Heart left ventricle (tissue), 16 donors: ENCODE measurements at regions of chr3 and their contacts with region 1.

Region 1: DNA sequence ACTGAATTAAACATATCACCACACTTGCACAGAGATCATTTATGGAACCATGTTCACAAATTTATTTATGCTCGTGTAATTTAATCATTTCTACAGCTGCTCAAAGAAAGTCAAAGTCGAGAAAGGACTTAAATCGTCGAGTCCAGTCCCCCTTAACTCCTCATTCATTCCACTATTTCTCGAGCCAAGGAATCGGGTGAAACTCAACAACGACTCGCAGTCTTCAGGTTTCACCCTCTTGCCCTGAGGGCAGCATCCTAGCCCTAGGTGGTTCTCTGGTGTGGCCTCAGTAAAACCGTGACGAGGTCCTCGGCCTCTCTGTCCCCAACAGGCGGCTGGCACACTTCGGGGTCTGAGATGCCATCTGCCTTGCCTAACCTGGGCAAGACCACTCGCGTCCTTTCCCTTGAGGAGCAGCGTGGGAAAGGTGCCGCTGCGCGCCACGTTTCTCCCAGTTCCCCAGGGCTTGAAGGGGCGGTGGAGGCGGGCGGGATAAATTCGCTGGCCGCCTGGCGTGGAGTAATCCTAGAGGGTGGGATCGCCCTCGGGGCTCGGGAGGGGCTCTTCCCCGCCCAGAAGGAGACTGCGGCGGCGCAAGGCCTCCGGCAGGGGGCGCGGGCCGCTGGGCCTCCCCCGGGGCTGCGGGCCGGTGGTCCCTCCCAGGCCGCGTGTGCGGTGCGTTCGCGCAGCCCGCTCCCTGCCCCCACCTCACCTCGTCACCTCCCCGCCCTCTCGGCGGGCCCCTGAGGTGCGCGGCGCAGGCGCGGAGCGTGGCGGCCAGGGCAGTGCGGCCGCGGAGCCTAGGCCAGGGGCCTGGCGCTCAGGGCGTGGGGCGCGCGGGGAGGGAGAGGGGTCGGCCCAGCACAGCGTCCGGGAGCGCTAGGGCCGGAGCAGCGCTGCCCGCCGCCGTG is at the start of gene ZNF639:
- DNase-seq: peak; percentile 85 to 92 (median 89)
- ATAC-seq: peak; percentile 82 to 92 (median 90)
- H3K4me3 ChIP-seq: peak within 1 kb of the TSS; percentile 38 to 97 (median 90)
- H3K27ac ChIP-seq: peak within 1 kb of the TSS; percentile 87 to 98 (median 96)
- H3K4me1 ChIP-seq: peaks cover 0 to 36% (median 22%) of the 10 kb centered on the region in 12 donors
- H3K27me3 ChIP-seq: no peaks in the 10 kb centered on the region
- CTCF ChIP-seq: peak; percentile 61 to 93 (median 89)
- POLR2A ChIP-seq: peak in 1 of 2 donors; percentile 66
- total RNA-seq, gene ZNF639: 27.1 to 46.0 (median 30.7) TPM

Region 2: GRCh38 chr3:179015551-179016020 is 307.0 kb before region 1 on chr3:
- intact Hi-C with region 1: loop called in 7 of 10 experiments (anchors 1 to 5 kb)
- DNase-seq: peak in 2 of 5 donors; percentile 32 to 34
- ATAC-seq: peak in 3 of 4 donors; percentile 69 to 77 (median 70)
- H3K4me3 ChIP-seq: no peak overlapping the region
- H3K27ac ChIP-seq: no peak overlapping the region
- H3K4me1 ChIP-seq: peaks cover 0 to 10% (median 9%) of the 10 kb centered on the region in 12 donors
- H3K27me3 ChIP-seq: no peaks in the 10 kb centered on the region
- CTCF ChIP-seq: peak; percentile 75 to 94 (median 86)
- POLR2A ChIP-seq: no peak

Region 3: DNA sequence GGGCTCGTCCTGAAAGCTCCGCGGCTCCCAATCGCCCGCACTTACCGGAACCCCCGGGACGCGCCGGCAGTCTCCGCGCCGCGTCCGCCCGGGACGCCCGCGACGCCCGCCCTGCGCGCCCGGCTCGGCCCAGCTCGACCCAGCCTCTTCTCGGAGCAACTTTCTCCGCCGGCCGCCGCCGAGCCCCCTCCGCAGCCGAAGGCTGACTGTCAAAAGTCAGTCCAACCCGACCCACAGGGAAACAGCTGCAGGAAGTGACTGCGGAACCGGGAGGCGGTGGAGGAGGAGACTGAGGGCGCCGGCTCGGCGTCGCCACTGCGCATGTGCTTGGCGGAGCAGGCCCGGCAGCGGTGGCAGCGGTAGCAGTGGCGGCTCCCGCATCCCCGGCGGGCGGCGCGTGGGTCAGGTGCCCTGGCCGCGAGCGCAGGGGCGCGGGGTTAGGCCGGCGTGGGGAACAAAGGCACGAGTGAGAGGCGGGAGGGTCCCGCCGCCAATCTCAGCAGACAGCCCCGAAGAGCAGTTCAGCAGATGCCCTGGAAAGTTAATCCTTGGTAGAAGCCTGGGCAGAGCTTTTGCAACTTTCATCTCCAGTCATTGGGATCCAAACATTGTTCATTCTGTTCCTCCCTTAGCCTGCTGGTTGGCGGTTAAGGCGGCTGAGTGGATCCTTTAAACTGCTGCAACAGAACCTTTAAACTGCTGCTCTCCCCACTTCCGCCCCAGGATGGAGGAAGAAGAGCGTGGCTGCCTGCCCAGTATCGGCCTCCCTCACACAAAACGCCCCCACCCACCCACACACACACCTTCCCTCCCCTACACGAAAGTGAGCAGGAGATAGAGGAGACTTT is 250.8 kb before region 1 on chr3 and contains the start of gene ZMAT3:
- intact Hi-C with region 1: loop called in 1 of 10 experiments (anchors 5 kb)
- DNase-seq: peak; percentile 92 to 95 (median 93)
- ATAC-seq: peak; percentile 78 to 99 (median 98)
- H3K4me3 ChIP-seq: peak within 1 kb of the TSS; percentile 49 to 96 (median 84)
- H3K27ac ChIP-seq: peak within 1 kb of the TSS; percentile 59 to 95 (median 90)
- H3K4me1 ChIP-seq: peaks cover 0 to 42% (median 21%) of the 10 kb centered on the region in 12 donors
- H3K27me3 ChIP-seq: no peaks in the 10 kb centered on the region
- CTCF ChIP-seq: peak in 2 of 12 donors; percentile 8 to 14
- POLR2A ChIP-seq: peak in 1 of 2 donors; percentile 79
- total RNA-seq, gene ZMAT3: 10.5 to 23.2 (median 15.6) TPM

Region 4: GRCh38 chr3:179108086-179108485 is 214.5 kb before region 1 on chr3:
- intact Hi-C with region 1: loop called in 5 of 10 experiments (anchors 2 to 5 kb)
- DNase-seq: no peak
- ATAC-seq: no peak
- H3K4me3 ChIP-seq: no peak overlapping the region
- H3K27ac ChIP-seq: no peak overlapping the region
- H3K4me1 ChIP-seq: no peaks in the 10 kb centered on the region
- H3K27me3 ChIP-seq: no peaks in the 10 kb centered on the region
- CTCF ChIP-seq: no peak
- POLR2A ChIP-seq: no peak

Region 5: DNA sequence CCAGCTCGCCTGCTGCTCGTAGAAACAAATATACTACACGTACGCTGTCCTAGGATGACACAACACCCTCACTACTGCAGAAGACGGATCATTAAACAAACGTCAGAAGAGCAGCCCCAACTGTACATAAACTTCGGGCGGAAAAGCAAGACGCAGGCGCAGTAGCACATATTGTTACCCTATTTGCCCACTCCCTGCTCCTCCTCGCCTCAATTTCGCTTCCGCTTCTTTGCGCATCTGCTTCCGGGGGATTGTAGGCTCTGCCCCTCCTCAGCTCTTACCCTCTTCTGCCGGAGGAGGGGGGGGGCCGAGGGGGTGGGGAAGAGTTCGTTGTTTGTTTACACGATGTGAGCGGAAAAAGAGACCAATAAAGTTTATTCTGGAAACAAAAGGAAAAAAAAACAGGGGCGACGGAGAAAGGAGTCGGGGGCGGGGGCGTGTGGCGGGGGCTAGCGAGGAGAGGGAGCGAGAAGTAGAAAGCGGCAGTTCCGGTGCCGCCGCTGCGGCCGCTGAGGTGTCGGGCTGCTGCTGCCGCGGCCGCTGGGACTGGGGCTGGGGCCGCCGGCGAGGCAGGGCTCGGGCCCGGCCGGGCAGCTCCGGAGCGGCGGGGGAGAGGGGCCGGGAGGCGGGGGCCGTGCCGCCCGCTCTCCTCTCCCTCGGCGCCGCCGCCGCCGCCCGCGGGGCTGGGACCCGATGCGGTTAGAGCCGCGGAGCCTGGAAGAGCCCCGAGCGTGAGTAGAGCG is 174.5 kb before region 1 on chr3 and contains the start of gene PIK3CA:
- intact Hi-C with region 1: loop called (anchors 2 to 5 kb)
- DNase-seq: peak; percentile 94 to 97 (median 96)
- ATAC-seq: peak; percentile 97 to 99 (median 98)
- H3K4me3 ChIP-seq: peak within 1 kb of the TSS; percentile 83 to 97 (median 88)
- H3K27ac ChIP-seq: peak within 1 kb of the TSS; percentile 94 to 99 (median 98)
- H3K4me1 ChIP-seq: peaks cover 0 to 41% (median 27%) of the 10 kb centered on the region in 12 donors
- H3K27me3 ChIP-seq: no peaks in the 10 kb centered on the region
- CTCF ChIP-seq: no peak
- POLR2A ChIP-seq: peak in 1 of 2 donors; percentile 77
- total RNA-seq, gene PIK3CA: 13.9 to 28.0 (median 21.4) TPM

Region 6: DNA sequence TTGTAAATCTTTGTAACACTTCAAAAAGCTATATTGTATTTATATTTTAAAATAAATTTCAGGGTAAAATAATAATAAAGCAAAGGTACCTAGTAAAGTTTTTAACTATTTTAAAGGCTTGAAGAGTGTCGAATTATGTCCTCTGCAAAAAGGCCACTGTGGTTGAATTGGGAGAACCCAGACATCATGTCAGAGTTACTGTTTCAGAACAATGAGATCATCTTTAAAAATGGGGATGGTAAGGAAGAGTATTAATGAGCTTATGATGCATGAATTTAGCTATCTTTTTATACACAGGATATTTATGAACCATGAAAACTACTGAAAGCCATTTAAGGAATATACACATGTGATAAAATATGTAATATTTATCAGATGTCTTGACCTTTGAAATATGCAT is 98.0 kb before region 1 on chr3:
- intact Hi-C with region 1: no loop called
- DNase-seq: no peak
- ATAC-seq: peak in 3 of 4 donors; percentile 59 to 73 (median 67)
- H3K4me3 ChIP-seq: no peak overlapping the region
- H3K27ac ChIP-seq: no peak overlapping the region
- H3K4me1 ChIP-seq: peaks cover 0 to 7% (median 0%) of the 10 kb centered on the region in 12 donors
- H3K27me3 ChIP-seq: no peaks in the 10 kb centered on the region
- CTCF ChIP-seq: no peak
- POLR2A ChIP-seq: no peak

Region 7: GRCh38 chr3:179347345-179348194 is 25.0 kb after region 1 on chr3 and contains the start of gene MFN1:
- intact Hi-C with region 1: loop called in 4 of 10 experiments (anchors 1 to 2 kb)
- DNase-seq: peak; percentile 95 to 97 (median 96)
- ATAC-seq: peak; percentile 97 to 100 (median 99)
- H3K4me3 ChIP-seq: peak within 1 kb of the TSS; percentile 67 to 93 (median 82)
- H3K27ac ChIP-seq: peak within 1 kb of the TSS; percentile 43 to 94 (median 88)
- H3K4me1 ChIP-seq: peaks cover 0 to 24% (median 8%) of the 10 kb centered on the region in 12 donors
- H3K27me3 ChIP-seq: no peaks in the 10 kb centered on the region
- CTCF ChIP-seq: no peak
- POLR2A ChIP-seq: peak in 1 of 2 donors; percentile 86
- total RNA-seq, gene MFN1: 28.5 to 78.0 (median 59.0) TPM

Region 8: GRCh38 chr3:179589143-179589542 is 266.6 kb after region 1 on chr3:
- intact Hi-C with region 1: no loop called
- DNase-seq: no peak
- ATAC-seq: peak in 1 of 4 donors; percentile 12
- H3K4me3 ChIP-seq: no peak overlapping the region
- H3K27ac ChIP-seq: no peak overlapping the region
- H3K4me1 ChIP-seq: peaks cover 0 to 12% (median 3%) of the 10 kb centered on the region in 12 donors
- H3K27me3 ChIP-seq: no peaks in the 10 kb centered on the region
- CTCF ChIP-seq: no peak
- POLR2A ChIP-seq: no peak